ENCODE measurements at regions of chr16 and their contacts with region 1.

Region 1: GRCh38 chr16:81908466-81909227 is 102.6 kb downstream of the SDR42E1 start:
- DNase-seq: no peak
- ATAC-seq: no peak
- H3K4me3 Mint-ChIP-seq: no peak overlapping the region
- H3K27ac Mint-ChIP-seq: no peak overlapping the region
- H3K4me1 Mint-ChIP-seq: no peaks in the 10 kb centered on the region
- H3K27me3 Mint-ChIP-seq: no peaks in the 10 kb centered on the region
- CTCF ChIP-seq: no peak

Region 2: GRCh38 chr16:81537721-81538561 is 370.7 kb before region 1 on chr16:
- CTCF ChIA-PET with region 1: no interaction called
- POLR2A ChIA-PET with region 1: no interaction called
- intact Hi-C with region 1: no loop called
- DNase-seq: no peak
- ATAC-seq: no peak
- H3K4me3 Mint-ChIP-seq: no peak overlapping the region
- H3K27ac Mint-ChIP-seq: no peak overlapping the region
- H3K4me1 Mint-ChIP-seq: peaks cover 18% of the 10 kb centered on the region
- H3K27me3 Mint-ChIP-seq: no peaks in the 10 kb centered on the region
- CTCF ChIP-seq: no peak

Region 3: GRCh38 chr16:81921085-81921814 is 12.6 kb after region 1 on chr16:
- CTCF ChIA-PET with region 1: no interaction called
- POLR2A ChIA-PET with region 1: interaction called, 11 read pairs
- intact Hi-C with region 1: no loop called
- DNase-seq: no peak
- ATAC-seq: no peak
- H3K4me3 Mint-ChIP-seq: no peak overlapping the region
- H3K27ac Mint-ChIP-seq: no peak overlapping the region
- H3K4me1 Mint-ChIP-seq: peaks cover 18% of the 10 kb centered on the region
- H3K27me3 Mint-ChIP-seq: no peaks in the 10 kb centered on the region
- CTCF ChIP-seq: no peak